PC-3 (cell line): ENCODE measurements at regions of chr10 and their contacts with region 1.

Region 1: DNA sequence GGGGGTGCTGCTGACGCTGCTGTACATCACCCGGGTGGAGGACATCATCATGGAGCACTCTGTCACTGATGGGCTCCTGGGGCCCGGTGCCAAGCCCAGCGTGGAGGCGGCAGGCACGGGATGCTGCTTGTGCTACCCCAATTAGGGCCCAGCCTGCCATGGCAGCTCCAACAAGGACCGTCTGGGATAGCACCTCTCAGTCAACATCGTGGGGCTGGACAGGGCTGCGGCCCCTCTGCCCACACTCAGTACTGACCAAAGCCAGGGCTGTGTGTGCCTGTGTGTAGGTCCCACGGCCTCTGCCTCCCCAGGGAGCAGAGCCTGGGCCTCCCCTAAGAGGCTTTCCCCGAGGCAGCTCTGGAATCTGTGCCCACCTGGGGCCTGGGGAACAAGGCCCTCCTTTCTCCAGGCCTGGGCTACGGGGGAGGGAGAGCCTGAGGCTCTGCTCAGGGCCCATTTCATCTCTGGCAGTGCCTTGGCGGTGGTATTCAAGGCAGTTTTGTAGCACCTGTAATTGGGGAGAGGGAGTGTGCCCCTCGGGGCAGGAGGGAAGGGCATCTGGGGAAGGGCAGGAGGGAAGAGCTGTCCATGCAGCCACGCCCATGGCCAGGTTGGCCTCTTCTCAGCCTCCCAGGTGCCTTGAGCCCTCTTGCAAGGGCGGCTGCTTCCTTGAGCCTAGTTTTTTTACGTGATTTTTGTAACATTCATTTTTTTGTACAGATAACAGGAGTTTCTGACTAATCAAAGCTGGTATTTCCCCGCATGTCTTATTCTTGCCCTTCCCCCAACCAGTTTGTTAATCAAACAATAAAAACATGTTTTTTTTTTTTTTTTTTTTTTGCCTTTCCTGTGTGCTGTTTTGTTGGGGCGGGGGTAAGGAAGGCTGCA is 55.8 kb downstream of the TSPAN15 start:
- DNase-seq: peak; percentile 85
- ATAC-seq: peak; percentile 42
- H3K4me3 ChIP-seq: peak overlapping the region; percentile 43; the same call in 1 of the 2 replicates
- H3K27ac ChIP-seq: peak overlapping the region; percentile 78
- H3K4me1 ChIP-seq: peaks cover 19% of the 10 kb centered on the region
- H3K27me3 ChIP-seq: no peaks in the 10 kb centered on the region
- CTCF ChIP-seq: no peak

Region 2: GRCh38 chr10:69360485-69361324 is 146.4 kb before region 1 on chr10:
- CTCF ChIA-PET with region 1: interaction called, 12 read pairs
- POLR2A ChIA-PET with region 1: no interaction called
- intact Hi-C with region 1: no loop called
- DNase-seq: peak; percentile 100
- ATAC-seq: peak; percentile 89
- H3K4me3 ChIP-seq: peak overlapping the region; percentile 8
- H3K27ac ChIP-seq: peak overlapping the region; percentile 91
- H3K4me1 ChIP-seq: peaks cover 44% of the 10 kb centered on the region
- H3K27me3 ChIP-seq: no peaks in the 10 kb centered on the region
- CTCF ChIP-seq: no peak

Region 3: DNA sequence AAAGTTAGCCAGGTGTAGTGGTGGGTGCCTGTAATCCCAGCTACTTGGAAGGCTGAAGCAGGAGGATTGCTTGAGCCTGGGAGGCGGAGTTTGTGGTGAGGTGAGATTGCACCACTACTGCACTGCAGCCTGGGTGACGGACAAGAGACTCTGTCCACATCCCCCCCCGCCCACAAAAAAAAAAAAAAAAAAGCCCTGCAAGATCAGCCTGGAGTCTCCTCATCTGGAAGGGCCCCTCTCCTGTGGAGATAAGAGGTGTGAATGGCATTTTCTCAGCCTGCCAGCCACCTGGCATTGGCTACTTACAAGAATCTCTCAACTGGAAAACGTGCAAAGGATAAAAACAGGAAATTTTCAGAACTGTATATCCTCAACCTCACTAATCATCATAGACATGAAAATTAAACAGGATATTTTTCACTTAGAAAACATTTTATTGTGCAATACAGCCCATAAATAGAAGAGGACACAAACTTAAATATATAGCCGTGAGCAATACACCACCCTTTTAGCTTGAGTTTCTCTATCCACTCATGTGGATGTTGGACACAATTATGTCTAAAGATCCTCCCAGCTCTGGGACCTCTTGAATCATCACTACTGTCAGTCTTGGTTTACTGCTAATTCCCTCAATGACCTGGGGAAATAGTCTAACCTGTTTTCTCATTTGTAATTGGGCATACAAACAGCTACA is 67.1 kb before region 1 on chr10:
- CTCF ChIA-PET with region 1: interaction called, 16 read pairs
- POLR2A ChIA-PET with region 1: no interaction called
- intact Hi-C with region 1: no loop called
- DNase-seq: peak; percentile 96
- ATAC-seq: peak; percentile 45
- H3K4me3 ChIP-seq: peak overlapping the region; percentile 31; the same call in 1 of the 2 replicates
- H3K27ac ChIP-seq: peak overlapping the region; percentile 91
- H3K4me1 ChIP-seq: peaks cover 53% of the 10 kb centered on the region
- H3K27me3 ChIP-seq: no peaks in the 10 kb centered on the region
- CTCF ChIP-seq: no peak

Region 4: GRCh38 chr10:69464801-69465401 is 42.2 kb before region 1 on chr10:
- CTCF ChIA-PET with region 1: no interaction called
- POLR2A ChIA-PET with region 1: no interaction called
- intact Hi-C with region 1: loop called (anchors 5 kb)
- DNase-seq: no peak
- ATAC-seq: peak; percentile 25
- H3K4me3 ChIP-seq: no peak overlapping the region
- H3K27ac ChIP-seq: no peak overlapping the region
- H3K4me1 ChIP-seq: peaks cover 49% of the 10 kb centered on the region
- H3K27me3 ChIP-seq: no peaks in the 10 kb centered on the region
- CTCF ChIP-seq: no peak

Region 5: DNA sequence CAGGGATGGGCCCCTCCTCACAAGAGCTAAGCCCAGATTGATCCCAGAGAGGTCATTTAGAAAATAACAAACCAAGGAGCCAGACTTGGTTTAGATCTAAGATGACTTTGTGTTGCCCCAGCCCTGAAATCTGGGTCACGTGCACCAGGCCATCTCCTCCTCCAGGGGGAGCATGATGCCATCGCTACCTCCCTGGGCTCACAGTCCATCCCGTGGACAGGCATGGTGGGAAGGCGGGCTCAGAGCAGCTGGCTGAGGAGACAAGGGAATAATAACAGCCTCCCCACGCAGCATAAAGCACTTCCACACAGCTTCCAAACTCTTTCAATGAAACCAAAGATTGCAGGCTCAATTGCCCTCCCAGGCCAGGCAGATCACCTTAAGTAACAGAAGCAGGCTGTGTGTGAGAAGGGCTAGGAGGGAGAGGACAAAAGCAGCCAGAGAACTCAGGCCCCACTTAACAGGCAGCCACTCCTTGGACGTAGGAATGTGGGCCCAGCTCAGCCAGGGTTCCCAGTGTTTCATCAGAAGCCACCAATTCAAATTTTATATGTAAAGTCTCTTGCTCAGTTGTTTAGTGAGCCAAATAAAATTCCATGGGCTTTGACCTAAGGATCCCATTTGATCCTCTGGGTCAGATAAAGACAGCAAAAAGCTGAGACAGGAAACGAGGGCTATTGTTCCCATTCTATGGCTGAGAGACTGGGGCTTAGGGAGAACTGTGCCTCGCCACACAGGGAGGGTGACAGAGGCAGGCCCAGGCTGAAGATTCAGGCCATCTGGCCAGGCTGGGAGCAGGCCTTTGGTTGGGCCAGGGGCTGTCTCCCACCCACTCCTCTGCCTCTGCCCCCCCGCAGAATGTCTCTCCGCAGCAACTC is 394.8 kb after region 1 on chr10:
- CTCF ChIA-PET with region 1: no interaction called
- POLR2A ChIA-PET with region 1: no interaction called
- intact Hi-C with region 1: no loop called
- DNase-seq: peak; percentile 78
- ATAC-seq: peak; percentile 85
- H3K4me3 ChIP-seq: no peak overlapping the region
- H3K27ac ChIP-seq: no peak overlapping the region
- H3K4me1 ChIP-seq: peaks cover 8% of the 10 kb centered on the region; the same call in 1 of the 2 replicates
- H3K27me3 ChIP-seq: no peaks in the 10 kb centered on the region
- CTCF ChIP-seq: peak; percentile 96